Right ventricle myocardium superior (tissue), 1 donor: ENCODE measurements at regions of chr7 and their contacts with region 1.

Region 1: DNA sequence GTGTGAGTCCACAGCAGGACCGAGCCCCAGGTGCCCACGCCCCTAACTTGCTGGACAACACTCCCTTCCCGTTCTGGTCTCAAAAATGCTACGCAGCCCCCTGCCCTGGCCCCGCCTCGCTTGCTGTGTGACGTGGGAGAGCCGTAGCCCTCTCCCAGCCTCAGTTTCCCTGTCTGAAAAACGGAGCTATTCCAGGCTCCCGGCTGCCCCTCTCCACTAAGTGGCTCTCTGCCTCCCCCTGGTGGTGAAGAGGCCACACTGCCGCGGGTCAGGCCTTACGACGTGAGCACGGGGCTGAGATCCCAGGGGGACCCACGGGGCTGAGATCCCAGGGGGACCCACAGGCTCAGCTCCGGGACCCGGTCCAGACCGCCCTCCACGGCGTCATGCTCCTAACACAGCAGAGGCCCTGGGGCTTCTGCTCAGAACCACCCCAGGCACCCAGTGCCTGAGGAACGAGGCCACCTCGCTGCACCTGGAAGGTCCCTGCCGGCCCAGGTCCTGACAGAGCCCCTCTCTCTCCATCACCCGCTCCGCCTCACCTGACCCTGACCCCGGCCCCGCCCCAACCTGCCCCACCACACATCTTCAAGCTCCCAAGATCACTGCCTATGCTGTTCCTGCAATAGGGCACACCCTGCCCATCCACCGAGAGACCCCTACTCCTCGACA is 26.7 kb downstream of the MICALL2 start:
- DNase-seq: peak; percentile 85
- ATAC-seq: peak; percentile 78

Region 2: GRCh38 chr7:1193593-1194424 is 238.7 kb before region 1 on chr7:
- intact Hi-C with region 1: loop called (anchors 5 kb)
- DNase-seq: peak; percentile 74
- ATAC-seq: peak; percentile 92

Region 3: DNA sequence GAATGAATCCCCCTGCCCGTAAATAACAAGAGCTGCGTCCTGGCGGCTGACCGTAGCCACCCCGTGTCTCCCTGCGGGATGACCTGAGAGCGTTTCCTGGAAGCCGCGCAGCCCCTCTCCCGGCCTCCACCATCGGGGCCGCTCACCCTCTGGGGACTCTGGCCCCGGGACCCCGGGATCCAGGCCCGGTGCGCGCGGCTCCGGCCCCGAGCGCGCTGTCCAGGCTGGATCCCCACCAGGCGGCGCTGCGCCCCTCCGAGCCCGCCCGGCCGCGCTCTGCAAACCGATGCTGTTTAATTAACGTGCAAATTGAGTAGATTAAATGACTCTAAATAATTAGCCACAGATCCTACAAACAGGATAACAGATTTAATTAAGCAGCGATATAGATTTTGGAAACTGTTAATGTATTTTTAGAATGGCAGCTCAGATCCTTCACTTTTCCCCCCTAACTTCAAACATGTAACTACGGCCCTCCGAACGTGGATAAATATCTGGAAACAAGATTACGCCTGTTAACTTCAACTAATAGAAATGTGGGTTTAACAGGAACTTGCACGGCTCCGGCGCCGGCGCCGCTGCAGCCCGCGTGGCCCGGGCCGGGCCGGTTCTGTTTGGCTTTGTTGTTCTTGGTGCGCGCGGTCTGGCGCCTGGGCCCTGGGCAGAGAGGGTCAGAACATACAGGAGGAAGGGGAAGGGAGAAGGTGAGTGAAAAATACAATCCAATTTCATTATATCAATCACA is 206.9 kb before region 1 on chr7:
- intact Hi-C with region 1: loop called (anchors 10 kb)
- DNase-seq: no peak
- ATAC-seq: no peak